ENCODE measurements at regions of chr7 and their contacts with region 1.

Region 1: GRCh38 chr7:95686109-95686508 is 86.2 kb upstream of the DYNC1I1 start:
- DNase-seq: no peak
- ATAC-seq: peak; percentile 55

Region 2: GRCh38 chr7:95511716-95512260 is 174.3 kb before region 1 on chr7:
- intact Hi-C with region 1: loop called (anchors 2 kb)
- DNase-seq: peak; percentile 84
- ATAC-seq: peak; percentile 96

Region 3: GRCh38 chr7:95527033-95527775 is 158.9 kb before region 1 on chr7:
- intact Hi-C with region 1: loop called (anchors 5 kb)
- DNase-seq: peak; percentile 64
- ATAC-seq: peak; percentile 85

Region 4: GRCh38 chr7:96321658-96322372 is 635.7 kb after region 1 on chr7 and contains the start of gene SLC25A13:
- intact Hi-C with region 1: no loop called
- DNase-seq: peak; percentile 95
- ATAC-seq: peak; percentile 99
- total RNA-seq, gene SLC25A13: 33.5 TPM

Measured in sciatic nerve (tissue), 2 donors.